Breast epithelium (tissue), 4 donors: ENCODE measurements at regions of chrX and their contacts with region 1.

Region 1: GRCh38 chrX:35499071-35499832 is 298.9 kb upstream of the MAGEB16 start:
- DNase-seq: no peak
- H3K4me3 ChIP-seq: no peak overlapping the region
- H3K27ac ChIP-seq: no peak overlapping the region
- H3K4me1 ChIP-seq: no peaks in the 10 kb centered on the region
- H3K27me3 ChIP-seq: peaks cover 0 to 4% of the 10 kb centered on the region in 2 donors
- CTCF ChIP-seq: no peak
- POLR2A ChIP-seq: no peak

Region 2: DNA sequence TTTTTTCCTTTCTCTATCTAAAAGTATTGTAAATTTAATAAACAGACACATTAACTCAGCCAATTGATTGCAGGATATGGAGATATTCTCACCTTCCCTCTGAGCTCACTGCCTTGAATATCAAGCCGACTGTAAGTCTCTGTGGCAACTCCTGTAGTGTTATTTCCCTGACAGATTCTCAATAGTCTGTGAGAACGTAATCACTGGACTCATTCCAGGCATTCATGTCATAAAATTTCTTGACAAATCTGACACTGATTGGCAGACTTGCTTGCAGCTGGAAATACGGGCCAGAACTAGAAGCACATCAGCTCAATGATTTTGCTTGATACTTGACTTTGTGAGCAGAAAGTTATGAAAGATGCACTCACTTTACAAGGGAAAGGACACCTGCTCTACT is 527.0 kb before region 1 on chrX:
- intact Hi-C with region 1: no loop called
- DNase-seq: no peak
- H3K4me3 ChIP-seq: no peak overlapping the region
- H3K27ac ChIP-seq: no peak overlapping the region
- H3K4me1 ChIP-seq: no peaks in the 10 kb centered on the region
- H3K27me3 ChIP-seq: peaks cover 0 to 27% of the 10 kb centered on the region in 2 donors
- CTCF ChIP-seq: no peak
- POLR2A ChIP-seq: no peak

Region 3: DNA sequence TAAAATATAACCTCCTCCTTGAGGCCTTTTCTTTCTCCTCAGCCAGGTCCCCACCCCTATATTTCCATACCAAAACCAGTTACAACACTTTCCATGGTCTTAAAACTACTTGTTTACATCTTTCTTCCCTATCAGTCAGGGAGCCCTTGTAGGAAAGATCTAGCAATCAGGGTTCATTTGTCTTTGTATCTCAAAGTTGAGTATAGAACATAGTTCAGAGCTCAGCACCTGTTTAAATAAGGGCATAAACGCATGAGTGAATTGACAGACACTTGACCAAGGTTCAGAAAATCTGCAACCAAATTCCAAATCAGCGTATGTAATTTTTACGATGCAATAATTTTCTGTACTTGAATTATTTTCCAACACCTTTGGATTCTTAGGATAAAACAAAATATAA is 53.3 kb before region 1 on chrX:
- intact Hi-C with region 1: loop called (anchors 2 kb)
- DNase-seq: no peak
- H3K4me3 ChIP-seq: no peak overlapping the region
- H3K27ac ChIP-seq: no peak overlapping the region
- H3K4me1 ChIP-seq: no peaks in the 10 kb centered on the region
- H3K27me3 ChIP-seq: peaks cover 0 to under 1% of the 10 kb centered on the region in 2 donors
- CTCF ChIP-seq: no peak
- POLR2A ChIP-seq: no peak